PC-9 (cell line): ENCODE measurements at regions of chr3 and their contacts with region 1.

Region 1: DNA sequence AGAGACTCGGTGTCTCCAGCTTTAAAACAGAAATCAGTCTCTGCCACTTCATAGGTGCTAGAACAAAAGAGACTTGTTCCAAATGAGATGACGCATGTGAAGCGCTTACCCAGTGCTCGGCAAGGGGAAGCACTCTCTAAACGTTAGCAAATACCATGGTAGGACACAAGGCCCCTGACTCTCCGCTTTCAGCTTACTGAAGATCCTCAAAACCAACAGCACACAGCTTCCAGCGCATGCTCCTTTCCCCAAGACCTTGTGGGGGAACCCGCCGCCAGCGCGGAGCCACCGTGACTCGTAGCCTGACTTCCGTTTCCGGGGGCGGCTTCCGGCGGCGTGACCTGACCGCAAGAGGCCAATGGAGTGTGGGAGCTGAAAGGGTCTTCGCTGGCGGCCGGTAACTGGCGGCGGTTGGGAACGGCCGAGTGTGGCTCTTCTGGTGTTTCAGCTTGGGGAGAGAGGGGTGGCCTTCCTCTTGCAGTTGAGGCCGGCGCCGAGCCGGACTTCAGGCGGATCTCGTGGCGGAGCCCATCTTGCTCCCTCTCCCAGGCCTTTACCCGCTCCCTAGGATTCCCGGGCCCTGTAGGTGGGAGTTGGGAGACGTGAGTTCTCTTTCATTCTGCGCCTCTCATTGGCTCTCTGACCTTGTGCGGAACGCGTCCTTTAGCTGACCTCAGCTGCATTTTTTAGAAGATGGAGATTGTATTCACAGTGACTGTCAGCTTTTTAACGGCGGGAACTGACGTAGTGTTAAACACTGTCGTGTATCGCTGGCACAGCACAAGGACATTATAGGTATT is at the start of gene THUMPD3:
- DNase-seq: peak; percentile 78 to 83
- H3K4me3 ChIP-seq: peak within 1 kb of the TSS; percentile 81
- H3K27ac ChIP-seq: peak within 1 kb of the TSS; percentile 78
- H3K4me1 ChIP-seq: peaks cover 22% of the 10 kb centered on the region; the same call in 1 of the 2 replicates
- H3K27me3 ChIP-seq: no peaks in the 10 kb centered on the region
- CTCF ChIP-seq: 0 out of 2 replicates have a peak, but pooled peaks have one; percentile 8
- total RNA-seq, gene THUMPD3: 48.8 and 49.9 TPM in 2 replicates

Region 2: DNA sequence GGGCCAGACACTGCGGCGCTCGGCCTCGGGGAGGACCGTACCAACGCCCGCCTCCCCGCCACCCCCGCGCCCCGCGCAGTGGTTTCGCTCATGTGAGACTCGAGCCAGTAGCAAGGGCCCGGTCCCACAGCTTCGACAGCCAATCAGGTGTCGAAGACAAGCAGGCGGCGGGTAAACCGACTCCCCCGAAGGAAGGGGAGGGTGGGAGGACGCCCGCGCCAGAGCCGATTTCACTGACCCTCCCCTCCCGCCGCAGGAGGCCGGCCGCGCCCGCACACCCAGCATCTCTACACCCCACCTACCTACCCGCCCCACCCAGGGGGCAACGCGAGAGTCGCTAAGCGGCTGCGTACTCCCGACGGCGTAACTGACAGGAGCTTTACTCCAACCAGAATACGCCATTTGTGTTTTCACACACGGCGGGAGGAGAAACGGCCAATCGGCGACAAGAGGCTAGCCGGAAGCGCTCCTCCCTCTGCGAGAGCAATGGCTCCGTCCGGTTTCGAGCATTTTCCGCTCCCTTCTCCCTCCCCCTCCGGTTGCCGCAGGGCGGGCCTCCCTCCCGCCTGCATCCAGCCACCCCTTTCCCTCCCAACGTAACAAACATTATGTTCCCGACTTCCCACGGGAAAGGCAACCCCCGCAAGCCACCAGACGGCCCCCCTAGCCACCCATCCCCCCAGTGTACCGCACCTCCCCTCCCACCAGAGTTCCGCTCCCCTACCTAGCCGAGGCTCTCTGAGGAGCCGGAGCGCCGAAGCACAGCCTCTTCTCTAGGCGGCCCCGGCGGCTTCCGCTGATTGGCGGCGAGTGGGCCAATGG is 34.0 kb after region 1 on chr3:
- CTCF ChIA-PET with region 1: no interaction called
- POLR2A ChIA-PET with region 1: interaction called, 18 read pairs
- intact Hi-C with region 1: no loop called
- DNase-seq: peak; percentile 95 to 98
- H3K4me3 ChIP-seq: peak overlapping the region; percentile 63
- H3K27ac ChIP-seq: peak overlapping the region; percentile 91
- H3K4me1 ChIP-seq: peaks cover 60% of the 10 kb centered on the region
- H3K27me3 ChIP-seq: no peaks in the 10 kb centered on the region
- CTCF ChIP-seq: no peak

Region 3: GRCh38 chr3:9441501-9442221 is 78.7 kb after region 1 on chr3:
- CTCF ChIA-PET with region 1: interaction called, 3 read pairs
- POLR2A ChIA-PET with region 1: interaction called, 12 read pairs
- intact Hi-C with region 1: no loop called
- DNase-seq: no peak
- H3K4me3 ChIP-seq: no peak overlapping the region
- H3K27ac ChIP-seq: no peak overlapping the region
- H3K4me1 ChIP-seq: no peaks in the 10 kb centered on the region
- H3K27me3 ChIP-seq: no peaks in the 10 kb centered on the region
- CTCF ChIP-seq: no peak

Region 4: GRCh38 chr3:10249862-10250232 is 886.9 kb after region 1 on chr3:
- CTCF ChIA-PET with region 1: interaction called, 16 read pairs
- POLR2A ChIA-PET with region 1: no interaction called
- intact Hi-C with region 1: no loop called
- DNase-seq: no peak
- H3K4me3 ChIP-seq: peak overlapping the region; percentile 80
- H3K27ac ChIP-seq: no peak overlapping the region
- H3K4me1 ChIP-seq: peaks cover 17% of the 10 kb centered on the region
- H3K27me3 ChIP-seq: no peaks in the 10 kb centered on the region
- CTCF ChIP-seq: no peak